ENCODE measurements at regions of chr6 and their contacts with region 1.

Region 1: DNA sequence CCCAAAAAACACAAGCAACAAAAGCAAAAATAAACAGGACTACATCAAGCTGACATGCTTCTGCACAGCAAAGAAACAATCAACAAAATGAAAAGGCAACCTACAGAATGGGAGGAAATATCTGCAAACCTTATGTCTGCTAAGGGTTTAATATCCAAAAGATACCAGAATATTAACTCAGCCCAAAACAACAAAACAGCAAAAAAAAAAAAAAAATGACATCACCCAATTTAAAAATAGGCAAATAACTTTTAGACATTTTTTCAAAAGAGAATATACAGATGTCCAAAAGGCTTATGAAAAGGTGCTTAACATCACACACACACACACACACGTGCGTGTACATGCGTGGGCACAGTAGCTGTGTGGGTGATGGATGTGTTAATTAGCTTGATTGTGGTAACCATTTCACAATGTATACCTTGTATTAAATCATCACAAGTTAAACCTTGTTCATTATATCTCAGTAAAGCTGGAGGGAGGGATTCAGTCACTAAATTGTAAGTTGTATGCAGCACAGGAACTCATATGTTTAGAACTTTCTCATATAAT is 52.4 kb downstream of the QKI start:
- DNase-seq: no peak
- ATAC-seq: peak in 1 of 4 donors; percentile 29
- H3K4me3 ChIP-seq: no peak overlapping the region
- H3K27ac ChIP-seq: peak overlapping the region in 1 of 12 donors; percentile 13
- H3K4me1 ChIP-seq: peaks cover 0 to 84% (median 67%) of the 10 kb centered on the region in 12 donors
- H3K27me3 ChIP-seq: no peaks in the 10 kb centered on the region
- CTCF ChIP-seq: no peak
- POLR2A ChIP-seq: no peak

Region 2: DNA sequence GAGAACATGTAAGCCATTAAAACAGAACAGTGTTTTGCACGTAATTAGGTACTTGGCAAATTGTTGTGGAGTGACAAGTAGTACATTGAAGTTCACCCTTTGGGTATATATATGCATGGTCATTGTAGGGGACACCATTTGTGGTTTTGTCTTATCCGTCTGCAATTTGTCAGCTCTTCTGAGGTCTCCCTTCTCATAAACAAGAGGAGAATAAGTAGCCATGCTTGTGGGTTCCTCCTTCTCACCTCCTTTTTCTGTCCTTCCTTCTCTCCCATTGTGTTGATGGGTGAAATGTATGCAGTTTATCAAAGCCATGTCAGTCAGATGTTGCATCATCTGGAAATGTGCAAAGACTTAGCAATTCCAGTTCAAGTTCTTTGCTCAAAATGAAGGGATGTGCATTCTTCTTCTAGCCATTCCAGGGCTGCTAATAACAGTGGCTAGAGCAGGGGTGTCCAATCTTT is 18.5 kb after region 1 on chr6:
- intact Hi-C with region 1: loop called in 1 of 10 experiments (anchors 1 kb)
- DNase-seq: no peak
- ATAC-seq: no peak
- H3K4me3 ChIP-seq: no peak overlapping the region
- H3K27ac ChIP-seq: no peak overlapping the region
- H3K4me1 ChIP-seq: peaks cover 11 to 97% (median 75%) of the 10 kb centered on the region in 12 donors
- H3K27me3 ChIP-seq: no peaks in the 10 kb centered on the region
- CTCF ChIP-seq: no peak
- POLR2A ChIP-seq: no peak

Region 3: DNA sequence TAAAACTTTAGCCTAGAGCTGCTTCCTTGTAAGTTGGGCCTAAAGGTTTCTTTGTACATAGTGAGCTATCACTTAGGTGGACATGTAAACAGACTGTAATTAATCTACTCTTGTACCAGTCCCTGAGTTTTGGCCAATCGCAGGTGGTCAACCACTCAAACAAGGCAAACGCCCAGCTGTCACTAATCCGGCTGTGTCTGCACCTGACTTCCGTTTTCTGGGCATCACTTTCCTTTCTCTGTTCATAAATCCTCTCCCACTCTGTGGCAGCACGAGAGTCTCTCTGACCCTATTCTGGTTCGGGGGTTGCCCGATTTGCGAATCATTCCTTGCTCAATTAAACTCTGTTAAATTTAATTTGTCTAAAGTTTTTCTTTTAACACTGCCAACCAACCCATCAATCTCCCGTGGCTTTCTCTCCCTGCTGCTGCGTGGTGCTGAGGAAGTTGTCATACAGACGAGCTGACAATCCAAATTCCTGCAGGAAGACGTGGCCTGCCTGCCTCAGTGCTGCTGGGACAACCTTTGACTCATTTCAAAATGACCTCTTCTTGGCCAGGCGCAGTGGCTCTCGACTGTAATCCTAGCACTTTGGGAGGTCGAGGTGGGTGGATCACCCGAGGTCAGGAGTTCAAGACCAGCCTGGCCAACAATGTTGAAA is 153.9 kb after region 1 on chr6:
- intact Hi-C with region 1: no loop called
- DNase-seq: no peak
- ATAC-seq: no peak
- H3K4me3 ChIP-seq: no peak overlapping the region
- H3K27ac ChIP-seq: no peak overlapping the region
- H3K4me1 ChIP-seq: no peaks in the 10 kb centered on the region
- H3K27me3 ChIP-seq: no peaks in the 10 kb centered on the region
- CTCF ChIP-seq: no peak
- POLR2A ChIP-seq: no peak

Region 4: DNA sequence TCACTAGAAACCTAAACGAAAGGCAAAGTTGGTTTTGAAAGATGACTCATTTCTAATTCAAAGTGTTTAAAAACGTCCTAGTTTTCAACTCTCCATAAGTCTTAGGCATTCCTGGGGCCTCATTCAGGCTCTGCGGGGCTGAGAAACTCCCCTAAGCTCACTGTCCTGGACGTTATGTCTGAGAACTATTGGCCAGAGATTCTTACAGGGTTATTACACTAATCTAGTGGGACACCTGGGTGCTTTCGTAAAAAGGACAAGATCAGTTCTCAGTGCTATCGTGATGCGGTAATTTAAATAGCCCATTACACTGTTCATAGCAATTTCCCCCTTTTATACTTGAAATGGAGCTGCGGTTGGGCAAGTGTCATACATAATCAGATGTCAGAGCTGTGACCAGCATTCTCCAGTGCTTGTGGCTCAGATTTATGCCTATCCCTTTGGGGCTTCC is 228.5 kb after region 1 on chr6:
- intact Hi-C with region 1: no loop called
- DNase-seq: no peak
- ATAC-seq: no peak
- H3K4me3 ChIP-seq: no peak overlapping the region
- H3K27ac ChIP-seq: no peak overlapping the region
- H3K4me1 ChIP-seq: no peaks in the 10 kb centered on the region
- H3K27me3 ChIP-seq: no peaks in the 10 kb centered on the region
- CTCF ChIP-seq: no peak
- POLR2A ChIP-seq: no peak

Measured in heart left ventricle (tissue), 16 donors.